ENCODE measurements at regions of chr18 and their contacts with region 1.

Region 1: DNA sequence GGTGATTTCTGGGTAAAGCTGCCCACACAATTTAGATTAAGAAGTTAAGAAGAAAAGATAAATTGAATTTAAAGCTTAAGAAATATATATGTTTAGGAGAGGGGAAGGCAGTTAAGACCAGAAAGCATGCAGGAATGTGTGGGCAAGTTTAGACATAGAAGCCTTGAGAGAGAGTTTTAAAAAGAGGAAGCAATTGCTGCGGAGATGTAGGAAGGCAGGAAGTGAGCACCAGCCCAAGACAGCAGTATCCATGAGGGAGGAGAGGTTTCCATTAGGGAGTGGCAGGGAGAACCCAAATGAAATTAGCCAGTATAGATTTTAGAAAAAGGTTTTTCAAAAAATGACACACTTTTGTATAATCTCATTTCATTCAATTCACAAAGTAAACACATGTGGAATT is 24.3 kb downstream of the DSC2 start:
- DNase-seq: no peak
- ATAC-seq: no peak
- H3K4me3 Mint-ChIP-seq: no peak overlapping the region
- H3K27ac Mint-ChIP-seq: no peak overlapping the region
- H3K4me1 Mint-ChIP-seq: no peaks in the 10 kb centered on the region
- H3K27me3 Mint-ChIP-seq: no peaks in the 10 kb centered on the region

Region 2: DNA sequence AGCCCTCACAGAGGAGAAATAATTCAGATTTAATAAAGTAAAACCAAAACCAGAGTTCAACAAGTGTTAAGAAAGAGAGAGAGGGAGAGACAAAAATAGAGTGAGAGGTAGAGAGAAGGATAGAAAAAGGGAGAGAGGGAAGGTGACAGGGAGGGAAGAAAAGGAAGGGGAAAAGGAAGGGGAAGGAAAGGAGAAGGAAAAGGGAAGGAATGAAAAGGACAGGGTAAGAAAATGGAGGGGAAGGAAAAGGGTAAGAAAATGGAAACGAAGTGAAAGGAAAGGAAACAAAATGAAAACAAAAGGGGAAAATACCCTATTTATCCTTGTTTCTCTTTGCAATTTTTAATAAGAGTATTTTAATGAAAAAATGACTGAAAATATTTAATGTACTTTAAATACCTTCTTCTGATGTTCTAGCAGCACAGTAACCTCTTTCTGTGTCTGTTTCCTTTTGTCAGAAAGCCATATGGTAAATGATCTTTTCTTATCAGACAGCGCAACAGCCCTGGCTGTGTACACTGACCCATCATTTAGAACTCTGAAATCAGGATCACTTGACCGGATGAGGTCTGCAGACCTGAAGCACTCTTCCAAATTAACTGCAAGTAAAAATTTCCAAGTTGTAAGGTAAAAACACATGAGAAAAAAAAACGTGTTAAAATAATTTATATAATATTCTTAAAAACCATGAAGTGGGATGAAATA is 47.2 kb before region 1 on chr18:
- CTCF ChIA-PET with region 1: no interaction called
- POLR2A ChIA-PET with region 1: no interaction called
- intact Hi-C with region 1: loop called in 1 of 2 experiments (anchors 10 kb)
- DNase-seq: no peak
- ATAC-seq: no peak
- H3K4me3 Mint-ChIP-seq: no peak overlapping the region
- H3K27ac Mint-ChIP-seq: no peak overlapping the region
- H3K4me1 Mint-ChIP-seq: no peaks in the 10 kb centered on the region
- H3K27me3 Mint-ChIP-seq: peaks cover 2% of the 10 kb centered on the region

Region 3: GRCh38 chr18:31129398-31130115 is 51.7 kb after region 1 on chr18:
- CTCF ChIA-PET with region 1: no interaction called
- POLR2A ChIA-PET with region 1: no interaction called
- intact Hi-C with region 1: loop called in 1 of 2 experiments (anchors 10 kb)
- DNase-seq: no peak
- ATAC-seq: no peak
- H3K4me3 Mint-ChIP-seq: no peak overlapping the region
- H3K27ac Mint-ChIP-seq: no peak overlapping the region
- H3K4me1 Mint-ChIP-seq: no peaks in the 10 kb centered on the region
- H3K27me3 Mint-ChIP-seq: no peaks in the 10 kb centered on the region

Region 4: GRCh38 chr18:31710826-31711225 is 632.9 kb after region 1 on chr18:
- CTCF ChIA-PET with region 1: no interaction called
- POLR2A ChIA-PET with region 1: no interaction called
- intact Hi-C with region 1: no loop called
- DNase-seq: no peak
- ATAC-seq: peak; percentile 26
- H3K4me3 Mint-ChIP-seq: no peak overlapping the region
- H3K27ac Mint-ChIP-seq: no peak overlapping the region
- H3K4me1 Mint-ChIP-seq: no peaks in the 10 kb centered on the region
- H3K27me3 Mint-ChIP-seq: no peaks in the 10 kb centered on the region